Posterior vena cava (tissue), 2 donors: ENCODE measurements at regions of chr12 and their contacts with region 1.

Region 1: DNA sequence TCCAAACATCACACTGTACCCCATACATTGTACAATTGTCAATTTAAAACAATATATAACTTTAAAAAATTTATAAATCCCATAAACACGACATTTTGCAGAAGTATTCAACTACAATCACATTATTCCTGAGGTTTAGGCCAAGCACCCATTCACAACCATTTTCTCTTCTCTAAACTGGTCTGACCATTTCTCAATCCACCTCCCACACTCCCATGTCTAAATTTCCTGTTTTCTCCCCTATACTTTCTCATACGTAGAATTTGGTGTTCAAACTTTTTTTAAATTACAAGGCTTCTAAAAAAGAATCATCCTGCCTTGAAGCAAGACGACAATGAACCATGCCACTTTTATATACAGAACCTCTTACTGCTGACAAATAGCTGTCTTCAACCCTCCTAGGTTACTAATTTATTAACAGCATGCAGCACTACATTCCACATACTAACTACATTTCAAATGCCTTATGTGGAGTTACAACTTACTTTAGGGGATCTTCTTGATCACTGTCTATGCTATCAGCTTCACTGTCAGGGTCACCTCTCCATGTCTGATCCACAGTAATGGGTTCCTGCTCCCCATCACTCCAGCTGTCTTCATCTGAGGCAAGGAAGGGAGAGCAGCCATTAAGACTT is 3.4 kb downstream of the KANSL2 start:
- DNase-seq: no peak

Region 2: DNA sequence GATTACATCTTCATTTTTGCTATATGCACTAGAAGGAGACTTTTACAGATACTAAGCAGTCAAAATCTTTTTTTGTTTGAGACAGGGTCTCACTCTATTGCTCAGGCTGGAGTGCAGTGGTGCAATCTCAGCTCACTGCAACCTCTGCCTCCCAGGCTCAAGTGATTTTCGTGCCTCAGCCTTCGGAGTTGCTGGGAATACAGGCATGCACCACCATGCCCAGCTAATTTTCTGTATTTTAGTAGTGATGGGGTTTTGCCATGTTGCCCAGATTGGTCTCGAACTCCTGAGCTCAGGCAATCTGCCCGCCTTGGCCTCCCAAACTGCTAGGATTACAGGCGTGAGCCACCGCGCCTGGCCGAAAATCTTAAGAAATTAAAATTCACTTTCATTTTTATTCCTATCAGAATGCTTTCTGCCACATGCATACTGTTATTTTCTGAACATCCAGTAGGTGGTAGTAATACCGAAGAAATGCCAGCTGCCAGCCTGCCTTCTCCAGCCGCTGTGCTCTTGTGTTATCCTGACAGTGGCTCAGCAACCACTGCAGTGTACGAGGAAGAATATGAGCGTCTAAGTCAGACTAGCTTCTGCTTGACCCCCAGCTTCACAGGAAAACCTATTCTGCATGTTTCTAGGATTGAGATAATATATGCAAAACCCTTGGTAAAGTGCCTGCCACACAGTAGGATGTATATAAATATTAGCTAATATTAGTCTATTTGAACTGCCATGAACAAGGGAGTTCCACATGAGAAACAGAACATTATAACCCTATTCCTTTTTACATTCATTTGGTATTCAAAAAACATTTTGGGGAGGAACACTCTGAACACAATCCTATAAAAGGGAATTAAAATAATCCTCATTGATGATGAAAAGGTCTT is 1027.1 kb before region 1 on chr12:
- intact Hi-C with region 1: loop called in 1 of 2 experiments (anchors 5 kb)
- DNase-seq: peak; percentile 83

Region 3: DNA sequence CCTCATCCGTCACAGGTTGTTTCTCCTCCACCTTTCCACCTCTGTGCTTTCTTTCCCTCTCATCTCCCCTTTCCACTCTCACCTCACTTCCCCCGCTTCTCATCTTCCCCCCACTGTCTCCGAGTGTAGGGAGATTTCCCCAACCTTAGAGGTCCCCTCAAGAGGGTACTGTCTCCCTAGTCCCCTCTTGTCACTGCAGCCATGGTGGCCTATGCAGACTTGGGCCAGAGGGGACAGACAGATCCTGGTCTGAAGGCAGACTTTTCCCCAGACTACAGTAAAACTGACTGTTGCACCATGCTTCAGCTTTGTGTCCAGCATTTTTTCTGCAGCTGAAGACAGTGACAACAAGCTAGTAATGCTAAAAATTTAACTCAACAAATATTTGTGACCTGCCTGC is 37.8 kb before region 1 on chr12:
- intact Hi-C with region 1: no loop called
- DNase-seq: no peak

Region 4: GRCh38 chr12:48690990-48691389 is 12.3 kb after region 1 on chr12:
- intact Hi-C with region 1: no loop called
- DNase-seq: no peak